ENCODE measurements at regions of chr4 and their contacts with region 1.

Region 1: DNA sequence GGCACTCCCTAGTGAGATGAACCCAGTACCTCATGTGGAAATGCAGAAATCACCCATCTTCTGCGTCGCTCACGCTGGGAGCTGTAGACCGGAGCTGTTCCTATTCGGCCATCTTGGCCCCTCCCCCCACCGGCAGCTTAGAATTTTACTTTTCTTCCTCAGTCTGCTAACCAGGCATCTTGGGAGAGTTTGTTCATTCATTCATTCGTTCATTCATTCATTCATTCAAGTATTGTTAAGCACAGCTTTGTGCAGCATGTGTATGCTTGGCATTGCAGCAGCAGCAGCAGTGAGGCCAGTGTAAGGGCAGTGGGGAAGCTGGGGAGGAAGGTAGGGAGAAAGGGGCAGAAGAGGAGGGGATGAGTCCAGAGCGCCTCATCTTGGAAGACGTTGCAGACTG is 56.8 kb downstream of the EVC start:
- DNase-seq: no peak
- H3K4me3 ChIP-seq: no peak overlapping the region
- H3K27ac ChIP-seq: no peak overlapping the region
- H3K4me1 ChIP-seq: no peaks in the 10 kb centered on the region
- H3K27me3 ChIP-seq: no peaks in the 10 kb centered on the region
- CTCF ChIP-seq: no peak
- POLR2A ChIP-seq: no peak

Region 2: GRCh38 chr4:5747738-5748365 is 19.9 kb before region 1 on chr4:
- intact Hi-C with region 1: loop called (anchors 2 kb)
- DNase-seq: no peak
- H3K4me3 ChIP-seq: no peak overlapping the region
- H3K27ac ChIP-seq: peak overlapping the region; percentile 56
- H3K4me1 ChIP-seq: peaks cover 13% of the 10 kb centered on the region
- H3K27me3 ChIP-seq: no peaks in the 10 kb centered on the region
- CTCF ChIP-seq: no peak
- POLR2A ChIP-seq: no peak